ENCODE measurements at regions of chr1 and their contacts with region 1.

Region 1: GRCh38 chr1:191414981-191415640 is 743.2 kb upstream of the RGS18 start:
- DNase-seq: no peak
- ATAC-seq: no peak
- H3K4me3 ChIP-seq: no peak overlapping the region
- H3K4me3 Mint-ChIP-seq: no peak overlapping the region
- H3K27ac ChIP-seq: no peak overlapping the region
- H3K27ac Mint-ChIP-seq: no peak overlapping the region
- H3K4me1 ChIP-seq: no peaks in the 10 kb centered on the region
- H3K4me1 Mint-ChIP-seq: no peaks in the 10 kb centered on the region
- H3K27me3 ChIP-seq: no peaks in the 10 kb centered on the region
- H3K27me3 Mint-ChIP-seq: no peaks in the 10 kb centered on the region
- CTCF ChIP-seq: no peak

Region 2: DNA sequence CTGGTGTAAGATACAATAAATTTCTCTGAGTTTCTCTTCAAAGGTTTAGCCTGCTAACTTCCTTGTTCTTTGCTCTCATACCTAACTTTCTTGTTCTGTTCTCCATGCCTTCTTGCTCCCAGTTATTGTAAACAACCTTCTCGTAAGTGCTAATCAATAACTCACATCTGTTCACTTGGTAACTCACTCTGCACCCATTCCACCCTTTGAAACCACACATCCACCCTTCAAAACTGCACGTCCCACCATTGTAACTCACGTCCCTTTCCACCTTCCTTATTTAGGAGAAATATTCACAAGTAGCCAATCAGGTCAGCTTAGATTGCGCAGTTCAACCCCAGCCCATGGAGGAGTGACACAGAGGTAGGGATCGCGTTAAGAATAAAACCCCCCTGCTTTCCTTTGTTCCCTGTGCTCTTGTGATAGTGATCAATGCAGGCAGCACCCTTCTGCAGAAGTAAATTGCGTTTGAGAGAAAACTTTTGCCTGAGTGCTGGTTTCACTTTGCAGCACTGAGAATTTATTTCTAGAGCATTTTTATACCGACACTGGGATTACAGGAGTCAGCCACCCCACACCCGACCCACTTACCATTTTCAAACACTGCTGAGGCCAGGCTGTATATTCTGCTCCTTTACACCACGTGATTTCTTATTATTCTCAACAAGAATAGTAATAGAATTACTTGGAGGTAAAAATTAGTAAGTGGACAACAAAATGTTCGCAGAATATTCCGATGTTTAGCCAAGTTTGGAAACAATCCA is 46.0 kb before region 1 on chr1:
- CTCF ChIA-PET with region 1: no interaction called
- POLR2A ChIA-PET with region 1: no interaction called
- intact Hi-C with region 1: no loop called
- DNase-seq: no peak
- ATAC-seq: no peak
- H3K4me3 ChIP-seq: no peak overlapping the region
- H3K4me3 Mint-ChIP-seq: no peak overlapping the region
- H3K27ac ChIP-seq: no peak overlapping the region
- H3K27ac Mint-ChIP-seq: no peak overlapping the region
- H3K4me1 ChIP-seq: no peaks in the 10 kb centered on the region
- H3K4me1 Mint-ChIP-seq: no peaks in the 10 kb centered on the region
- H3K27me3 ChIP-seq: no peaks in the 10 kb centered on the region
- H3K27me3 Mint-ChIP-seq: no peaks in the 10 kb centered on the region
- CTCF ChIP-seq: no peak

Region 3: DNA sequence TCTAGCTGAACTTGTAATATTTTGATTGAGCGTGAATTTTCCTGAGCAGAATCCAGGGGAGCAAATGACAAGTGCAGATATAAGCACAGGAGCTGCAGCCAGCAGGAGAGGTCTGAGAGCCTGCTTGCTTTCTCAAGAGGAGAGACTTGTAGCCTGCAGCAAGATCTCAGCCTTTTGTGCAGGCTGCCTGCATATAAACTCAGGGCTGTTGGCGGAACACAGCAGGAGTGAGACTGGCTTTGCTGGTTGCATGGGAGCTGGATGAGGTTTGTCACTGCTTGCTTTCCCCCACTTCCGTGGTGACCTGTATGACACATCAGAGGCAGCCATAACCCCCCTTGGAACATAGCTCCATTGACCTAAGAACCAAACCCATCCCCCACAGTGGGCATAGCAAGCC is 17.7 kb after region 1 on chr1:
- CTCF ChIA-PET with region 1: no interaction called
- POLR2A ChIA-PET with region 1: no interaction called
- intact Hi-C with region 1: loop called in 1 of 2 experiments (anchors 2 kb)
- DNase-seq: no peak
- ATAC-seq: no peak
- H3K4me3 ChIP-seq: no peak overlapping the region
- H3K4me3 Mint-ChIP-seq: no peak overlapping the region
- H3K27ac ChIP-seq: no peak overlapping the region
- H3K27ac Mint-ChIP-seq: no peak overlapping the region
- H3K4me1 ChIP-seq: no peaks in the 10 kb centered on the region
- H3K4me1 Mint-ChIP-seq: no peaks in the 10 kb centered on the region
- H3K27me3 ChIP-seq: no peaks in the 10 kb centered on the region
- H3K27me3 Mint-ChIP-seq: no peaks in the 10 kb centered on the region
- CTCF ChIP-seq: no peak

Region 4: GRCh38 chr1:192170196-192170984 is 755.3 kb after region 1 on chr1:
- CTCF ChIA-PET with region 1: no interaction called
- POLR2A ChIA-PET with region 1: no interaction called
- intact Hi-C with region 1: no loop called
- DNase-seq: peak in 3 of 14 experiments; percentile 6 to 14 (median 12)
- ATAC-seq: no peak
- H3K4me3 ChIP-seq: no peak overlapping the region
- H3K4me3 Mint-ChIP-seq: no peak overlapping the region
- H3K27ac ChIP-seq: no peak overlapping the region
- H3K27ac Mint-ChIP-seq: no peak overlapping the region
- H3K4me1 ChIP-seq: no peaks in the 10 kb centered on the region
- H3K4me1 Mint-ChIP-seq: no peaks in the 10 kb centered on the region
- H3K27me3 ChIP-seq: no peaks in the 10 kb centered on the region
- H3K27me3 Mint-ChIP-seq: no peaks in the 10 kb centered on the region
- CTCF ChIP-seq: no peak

Measured in CD4-positive, alpha-beta T cell (primary cell).